Breast epithelium (tissue), 4 donors: ENCODE measurements at regions of chr9 and their contacts with region 1.

Region 1: GRCh38 chr9:18442629-18443491 is 31.1 kb upstream of the ADAMTSL1 start:
- DNase-seq: peak; percentile 56 to 67
- H3K4me3 ChIP-seq: no peak overlapping the region
- H3K27ac ChIP-seq: peak overlapping the region in 1 of 2 donors; percentile 30
- H3K4me1 ChIP-seq: peaks cover 0 to 7% of the 10 kb centered on the region in 2 donors
- H3K27me3 ChIP-seq: no peaks in the 10 kb centered on the region
- CTCF ChIP-seq: peak; percentile 57 to 74 (median 72)
- POLR2A ChIP-seq: no peak

Region 2: GRCh38 chr9:17783227-17783626 is 659.6 kb before region 1 on chr9:
- intact Hi-C with region 1: loop called (anchors 5 kb)
- DNase-seq: no peak
- H3K4me3 ChIP-seq: no peak overlapping the region
- H3K27ac ChIP-seq: no peak overlapping the region
- H3K4me1 ChIP-seq: no peaks in the 10 kb centered on the region
- H3K27me3 ChIP-seq: no peaks in the 10 kb centered on the region
- CTCF ChIP-seq: no peak
- POLR2A ChIP-seq: no peak

Region 3: DNA sequence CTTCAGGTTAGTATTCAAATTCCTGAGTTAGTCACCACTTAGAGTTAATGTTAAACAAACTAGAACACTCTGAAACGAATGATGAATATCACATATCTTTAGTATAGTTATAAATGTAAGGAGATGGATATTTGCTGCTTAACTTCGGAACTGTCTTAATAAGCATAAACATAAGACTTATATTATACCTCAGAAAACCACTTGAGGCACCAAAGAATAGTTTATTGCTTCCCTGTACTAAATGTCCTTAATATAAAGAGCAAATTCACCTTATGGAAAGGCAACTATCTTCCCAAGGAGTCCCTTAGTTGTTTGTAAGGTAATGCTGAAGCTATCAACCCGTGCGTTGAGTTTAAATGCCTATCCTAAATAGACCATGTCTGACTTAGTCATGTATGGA is 268.9 kb before region 1 on chr9:
- intact Hi-C with region 1: no loop called
- DNase-seq: no peak
- H3K4me3 ChIP-seq: no peak overlapping the region
- H3K27ac ChIP-seq: no peak overlapping the region
- H3K4me1 ChIP-seq: no peaks in the 10 kb centered on the region
- H3K27me3 ChIP-seq: no peaks in the 10 kb centered on the region
- CTCF ChIP-seq: no peak
- POLR2A ChIP-seq: no peak